ENCODE measurements at regions of chr1 and their contacts with region 1.

Region 1: DNA sequence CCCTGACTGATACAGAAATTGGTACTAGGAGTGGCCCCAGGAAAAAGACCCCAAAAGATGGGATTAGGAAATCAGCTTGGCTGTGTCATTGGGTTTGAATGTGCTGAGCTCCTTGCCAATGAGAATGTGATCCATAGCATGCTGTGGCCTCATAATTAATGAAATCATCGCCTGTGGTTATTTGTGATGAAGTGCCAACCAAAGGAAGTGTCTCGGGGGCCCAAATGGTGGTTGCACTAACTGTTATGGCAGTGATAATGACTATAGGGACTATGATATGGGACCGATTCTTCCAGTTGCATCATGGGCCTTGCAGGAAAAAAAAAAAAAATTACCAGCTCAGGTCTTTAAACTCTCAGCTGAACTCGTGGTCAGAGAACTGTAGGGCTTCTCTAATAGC is 15.4 kb upstream of the ZDHHC18 start:
- DNase-seq: no peak
- H3K4me3 ChIP-seq: no peak overlapping the region
- CTCF ChIP-seq: no peak

Region 2: GRCh38 chr1:26608895-26609294 is 202.2 kb before region 1 on chr1:
- CTCF ChIA-PET with region 1: interaction called, 52 read pairs
- POLR2A ChIA-PET with region 1: no interaction called
- DNase-seq: no peak
- H3K4me3 ChIP-seq: no peak overlapping the region
- CTCF ChIP-seq: no peak

Region 3: GRCh38 chr1:26772687-26773086 is 38.4 kb before region 1 on chr1:
- CTCF ChIA-PET with region 1: no interaction called
- POLR2A ChIA-PET with region 1: no interaction called
- DNase-seq: peak; percentile 98
- H3K4me3 ChIP-seq: no peak overlapping the region
- CTCF ChIP-seq: no peak

Region 4: DNA sequence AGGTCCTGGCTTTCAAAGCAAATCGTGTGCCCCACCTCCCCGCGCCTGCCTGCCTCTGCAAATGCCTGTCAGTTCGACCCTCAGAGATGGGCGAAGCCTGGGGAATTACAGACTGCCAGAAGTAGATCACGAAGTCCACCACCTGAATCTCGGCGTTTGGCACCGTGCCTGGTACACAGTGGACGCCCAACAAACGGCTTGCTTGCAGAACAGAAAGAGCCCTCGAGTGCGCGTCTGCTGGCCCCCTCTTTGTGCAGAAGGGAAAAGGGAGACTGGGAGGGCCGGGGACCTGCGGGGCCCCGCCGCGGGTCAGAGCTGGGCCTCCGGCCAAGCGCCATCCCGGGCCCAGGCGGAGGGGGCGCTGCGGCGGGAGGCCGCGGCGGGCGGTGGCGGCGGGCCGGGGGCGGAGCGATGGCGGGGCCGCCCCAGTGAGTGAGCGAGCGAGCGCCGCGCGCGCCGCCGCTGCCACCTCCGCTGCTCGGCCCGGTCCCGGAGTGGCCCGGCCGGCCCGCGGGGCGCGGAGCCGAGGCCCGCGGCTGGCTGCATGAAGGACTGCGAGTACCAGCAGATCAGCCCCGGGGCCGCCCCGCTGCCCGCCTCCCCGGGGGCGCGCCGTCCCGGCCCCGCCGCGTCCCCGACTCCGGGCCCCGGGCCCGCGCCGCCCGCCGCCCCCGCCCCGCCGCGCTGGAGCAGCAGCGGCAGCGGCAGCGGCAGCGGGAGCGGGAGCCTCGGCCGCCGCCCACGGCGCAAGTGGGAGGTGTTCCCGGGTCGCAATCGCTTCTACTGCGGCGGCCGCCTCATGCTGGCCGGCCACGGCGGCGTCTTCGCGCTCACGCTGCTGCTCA is 15.4 kb after region 1 on chr1 and contains the start of gene ZDHHC18:
- CTCF ChIA-PET with region 1: interaction called, 36 read pairs
- POLR2A ChIA-PET with region 1: no interaction called
- DNase-seq: no peak
- H3K4me3 ChIP-seq: peak within 1 kb of the TSS; percentile 69
- CTCF ChIP-seq: peak; percentile 52

Region 5: GRCh38 chr1:26864610-26865527 is 53.8 kb after region 1 on chr1:
- CTCF ChIA-PET with region 1: interaction called, 14 read pairs
- POLR2A ChIA-PET with region 1: no interaction called
- DNase-seq: peak; percentile 86
- H3K4me3 ChIP-seq: peak overlapping the region; percentile 59
- CTCF ChIP-seq: no peak

Region 6: GRCh38 chr1:26889551-26890466 is 78.8 kb after region 1 on chr1 and contains the start of gene GPN2:
- CTCF ChIA-PET with region 1: interaction called, 17 read pairs
- POLR2A ChIA-PET with region 1: no interaction called
- DNase-seq: peak; percentile 21
- H3K4me3 ChIP-seq: peak within 1 kb of the TSS; percentile 98
- CTCF ChIP-seq: no peak

Measured in AG04449 (cell line).